IMR-90 (cell line): ENCODE measurements at regions of chr2 and their contacts with region 1.

Region 1: GRCh38 chr2:192218347-192218746 is 23.6 kb upstream of the TMEFF2 start:
- DNase-seq: no peak
- ATAC-seq: no peak
- H3K4me3 ChIP-seq: no peak overlapping the region
- H3K27ac ChIP-seq: no peak overlapping the region
- H3K4me1 ChIP-seq: no peaks in the 10 kb centered on the region
- H3K27me3 ChIP-seq: no peaks in the 10 kb centered on the region; the same call in 1 of the 2 replicates
- CTCF ChIP-seq: no peak
- POLR2A ChIP-seq: no peak
- RAD21 ChIP-seq: no peak

Region 2: GRCh38 chr2:191728750-191729624 is 489.4 kb before region 1 on chr2:
- CTCF ChIA-PET with region 1: interaction called, 4 read pairs
- POLR2A ChIA-PET with region 1: interaction called, 12 read pairs
- dilution Hi-C with region 1: no loop called
- in situ Hi-C with region 1: no loop called
- intact Hi-C with region 1: no loop called
- DNase-seq: peak; percentile 49
- ATAC-seq: peak; percentile 49
- H3K4me3 ChIP-seq: no peak overlapping the region
- H3K27ac ChIP-seq: no peak overlapping the region
- H3K4me1 ChIP-seq: no peaks in the 10 kb centered on the region
- H3K27me3 ChIP-seq: peaks cover 13% of the 10 kb centered on the region
- CTCF ChIP-seq: no peak
- POLR2A ChIP-seq: no peak
- RAD21 ChIP-seq: no peak

Region 3: DNA sequence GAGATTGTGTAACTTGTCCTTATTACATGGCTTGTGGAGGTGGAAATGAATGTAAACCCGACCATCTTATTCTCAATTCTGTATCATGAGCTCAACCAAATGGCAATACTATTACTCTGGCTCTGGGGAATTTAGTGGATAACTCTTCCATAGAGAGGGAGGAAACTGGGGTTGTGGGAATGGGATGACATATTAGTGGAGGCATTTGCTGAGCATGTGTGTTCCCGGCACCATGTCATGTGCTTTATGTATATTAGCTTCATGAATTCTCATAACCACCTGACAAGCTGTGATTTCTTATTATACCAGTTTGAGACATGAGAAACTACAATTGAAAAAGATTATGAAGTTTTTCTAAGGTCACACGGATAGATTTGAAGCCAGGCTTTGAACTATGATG is 89.2 kb after region 1 on chr2:
- CTCF ChIA-PET with region 1: no interaction called
- POLR2A ChIA-PET with region 1: no interaction called
- dilution Hi-C with region 1: no loop called
- in situ Hi-C with region 1: no loop called
- intact Hi-C with region 1: no loop called
- DNase-seq: peak; percentile 17
- ATAC-seq: no peak
- H3K4me3 ChIP-seq: no peak overlapping the region
- H3K27ac ChIP-seq: no peak overlapping the region
- H3K4me1 ChIP-seq: no peaks in the 10 kb centered on the region
- H3K27me3 ChIP-seq: no peaks in the 10 kb centered on the region
- CTCF ChIP-seq: no peak
- POLR2A ChIP-seq: no peak
- RAD21 ChIP-seq: no peak

Region 4: DNA sequence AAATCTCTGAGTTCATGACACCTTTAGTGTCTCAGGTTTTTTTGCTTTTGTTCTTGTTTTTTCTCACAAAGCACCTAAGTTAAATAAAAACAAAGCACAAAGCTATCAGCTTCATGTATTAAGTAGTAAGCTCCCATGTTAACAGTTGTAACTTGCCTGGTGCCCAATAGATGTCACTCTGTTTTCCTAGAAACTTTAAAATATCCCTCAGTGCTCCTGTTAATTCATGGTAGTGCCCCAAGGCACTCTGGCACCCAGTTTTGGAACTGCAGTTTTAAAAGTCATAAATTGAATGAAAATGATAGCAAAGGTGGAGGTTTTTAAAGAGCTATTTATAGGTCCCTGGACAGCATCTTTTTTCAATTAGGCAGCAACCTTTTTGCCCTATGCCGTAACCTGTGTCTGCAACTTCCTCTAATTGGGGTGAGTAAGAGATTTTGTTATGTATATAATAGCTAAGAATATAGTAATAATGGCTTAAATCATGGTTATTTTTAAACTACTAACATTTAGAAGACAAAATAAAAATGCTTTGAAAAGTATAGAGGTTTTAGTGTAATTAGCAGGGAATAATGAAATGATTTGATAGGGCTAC is 531.4 kb after region 1 on chr2:
- CTCF ChIA-PET with region 1: no interaction called
- POLR2A ChIA-PET with region 1: no interaction called
- dilution Hi-C with region 1: no loop called
- in situ Hi-C with region 1: no loop called
- intact Hi-C with region 1: no loop called
- DNase-seq: no peak
- ATAC-seq: no peak
- H3K4me3 ChIP-seq: no peak overlapping the region
- H3K27ac ChIP-seq: no peak overlapping the region
- H3K4me1 ChIP-seq: no peaks in the 10 kb centered on the region
- H3K27me3 ChIP-seq: no peaks in the 10 kb centered on the region
- CTCF ChIP-seq: no peak
- POLR2A ChIP-seq: no peak
- RAD21 ChIP-seq: no peak